Motor neuron (in vitro differentiated cells): ENCODE measurements at regions of chr11 and their contacts with region 1.

Region 1: DNA sequence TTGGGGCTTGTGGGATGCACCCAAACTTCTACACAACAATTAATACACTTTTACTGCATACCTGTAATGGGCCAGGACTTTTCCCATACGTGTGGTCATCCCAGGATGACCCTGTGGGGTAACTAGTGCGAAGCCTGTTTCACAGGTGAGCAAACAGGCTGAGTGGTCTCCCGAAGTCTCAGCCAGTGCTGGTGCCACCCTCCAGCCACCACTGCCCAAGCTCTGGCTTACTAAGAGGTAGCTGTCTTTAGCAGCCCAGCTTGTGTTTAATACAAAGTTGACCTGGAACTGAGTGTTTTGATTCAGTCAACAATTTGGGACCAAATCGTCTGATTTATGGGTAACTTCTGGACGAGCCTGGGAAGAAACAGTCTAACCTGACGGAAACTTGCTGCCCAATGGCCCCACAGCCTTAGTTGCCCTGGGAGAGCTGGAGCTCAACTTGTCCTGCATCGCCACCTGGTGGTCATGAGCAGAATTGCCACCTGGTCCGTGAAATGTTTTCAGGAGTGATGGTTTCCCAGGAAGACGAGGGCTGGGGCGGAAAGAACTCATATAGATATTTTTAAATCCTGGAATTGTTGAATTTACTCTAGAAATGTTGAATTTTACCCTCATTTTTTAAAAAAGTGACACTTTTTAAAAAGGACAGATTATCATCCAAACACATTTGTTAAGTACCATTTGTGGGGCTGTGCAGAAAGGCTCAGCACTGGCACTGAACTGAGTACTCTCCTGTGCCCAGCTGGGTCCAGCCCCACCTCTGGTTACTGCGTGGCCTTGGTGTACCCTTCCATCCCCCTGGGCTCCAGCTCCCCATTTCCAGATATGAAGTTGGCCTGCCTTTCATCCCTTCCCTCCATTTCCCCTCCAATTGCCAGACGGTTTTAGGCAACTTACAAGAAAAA is 95.5 kb upstream of the PARVA start:
- ATAC-seq: peak; percentile 25 to 84 (median 66)
- H3K4me3 ChIP-seq: no peak overlapping the region
- H3K27ac ChIP-seq: no peak overlapping the region
- H3K4me1 ChIP-seq: no peaks in the 10 kb centered on the region

Region 2: DNA sequence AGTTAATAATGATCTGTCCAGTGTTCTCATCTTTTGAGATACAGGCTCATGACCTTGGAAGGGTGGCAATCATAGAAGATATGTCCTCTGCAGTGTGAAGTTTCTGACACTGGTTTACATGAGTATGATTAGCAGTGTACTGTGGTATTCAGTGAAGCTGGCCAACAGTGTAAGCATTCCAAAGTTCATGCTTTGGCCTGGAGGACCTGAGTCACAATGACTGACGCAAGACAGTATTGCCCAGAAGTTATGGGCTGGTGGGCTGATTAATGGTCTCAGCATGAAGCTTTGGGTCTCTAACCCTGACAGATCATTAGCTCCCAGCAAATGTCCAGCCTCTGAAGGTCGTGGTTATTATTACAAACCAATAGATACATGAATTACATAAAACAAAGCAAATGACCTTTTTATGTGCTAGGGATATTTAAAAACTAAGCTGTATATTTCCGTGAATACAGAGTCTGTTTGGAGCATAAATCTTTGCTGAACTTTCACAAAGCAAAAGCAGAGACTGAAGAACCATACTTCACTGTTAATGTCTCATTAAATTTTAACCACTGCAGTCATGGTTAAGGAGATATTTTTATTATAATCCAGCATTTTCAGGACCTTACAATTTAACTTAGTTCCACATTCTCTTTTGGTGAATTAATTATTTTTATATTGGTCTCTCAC is 468.4 kb before region 1 on chr11:
- in situ Hi-C with region 1: loop called in 3 of 9 experiments (anchors 25 kb)
- ATAC-seq: peak in 3 of 8 experiments; percentile 45 to 100 (median 98)
- H3K4me3 ChIP-seq: no peak overlapping the region
- H3K27ac ChIP-seq: no peak overlapping the region
- H3K4me1 ChIP-seq: no peaks in the 10 kb centered on the region

Region 3: GRCh38 chr11:11931461-11932055 is 350.3 kb before region 1 on chr11:
- in situ Hi-C with region 1: loop called in 2 of 9 experiments (anchors 25 kb)
- ATAC-seq: peak in 5 of 8 experiments; percentile 43 to 88 (median 72)
- H3K4me3 ChIP-seq: no peak overlapping the region
- H3K27ac ChIP-seq: no peak overlapping the region
- H3K4me1 ChIP-seq: no peaks in the 10 kb centered on the region

Region 4: GRCh38 chr11:12052676-12053605 is 228.9 kb before region 1 on chr11:
- in situ Hi-C with region 1: loop called in 6 of 9 experiments (anchors 5 to 10 kb)
- ATAC-seq: no peak
- H3K4me3 ChIP-seq: no peak overlapping the region
- H3K27ac ChIP-seq: no peak overlapping the region
- H3K4me1 ChIP-seq: peaks cover 0 to 8% of the 10 kb centered on the region in 2 donors

Region 5: DNA sequence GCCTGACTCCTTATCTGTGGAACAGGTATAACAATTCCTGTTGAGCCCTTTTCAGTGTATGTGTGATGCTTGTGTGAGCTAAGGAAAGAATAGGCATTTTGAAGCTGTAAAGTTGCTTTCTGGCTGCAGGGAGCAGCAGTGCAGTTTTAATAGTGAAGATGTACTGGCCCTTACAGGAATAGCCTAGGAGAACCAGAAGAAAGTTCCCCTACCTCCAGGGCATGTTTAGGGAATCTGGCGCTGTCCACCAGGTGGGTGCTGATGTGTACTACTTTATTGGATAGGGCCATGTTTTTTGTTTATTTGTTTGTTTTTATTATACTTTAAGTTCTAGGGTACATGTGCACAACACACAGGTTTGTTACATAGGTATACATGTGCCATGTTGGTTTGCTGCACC is 1007.3 kb after region 1 on chr11:
- in situ Hi-C with region 1: no loop called
- ATAC-seq: peak in 2 of 8 experiments; percentile 18 to 24
- H3K4me3 ChIP-seq: no peak overlapping the region
- H3K27ac ChIP-seq: no peak overlapping the region
- H3K4me1 ChIP-seq: peaks cover 0 to 12% of the 10 kb centered on the region in 2 donors